Panc1 (cell line): ENCODE measurements at regions of chr1 and their contacts with region 1.

Region 1: DNA sequence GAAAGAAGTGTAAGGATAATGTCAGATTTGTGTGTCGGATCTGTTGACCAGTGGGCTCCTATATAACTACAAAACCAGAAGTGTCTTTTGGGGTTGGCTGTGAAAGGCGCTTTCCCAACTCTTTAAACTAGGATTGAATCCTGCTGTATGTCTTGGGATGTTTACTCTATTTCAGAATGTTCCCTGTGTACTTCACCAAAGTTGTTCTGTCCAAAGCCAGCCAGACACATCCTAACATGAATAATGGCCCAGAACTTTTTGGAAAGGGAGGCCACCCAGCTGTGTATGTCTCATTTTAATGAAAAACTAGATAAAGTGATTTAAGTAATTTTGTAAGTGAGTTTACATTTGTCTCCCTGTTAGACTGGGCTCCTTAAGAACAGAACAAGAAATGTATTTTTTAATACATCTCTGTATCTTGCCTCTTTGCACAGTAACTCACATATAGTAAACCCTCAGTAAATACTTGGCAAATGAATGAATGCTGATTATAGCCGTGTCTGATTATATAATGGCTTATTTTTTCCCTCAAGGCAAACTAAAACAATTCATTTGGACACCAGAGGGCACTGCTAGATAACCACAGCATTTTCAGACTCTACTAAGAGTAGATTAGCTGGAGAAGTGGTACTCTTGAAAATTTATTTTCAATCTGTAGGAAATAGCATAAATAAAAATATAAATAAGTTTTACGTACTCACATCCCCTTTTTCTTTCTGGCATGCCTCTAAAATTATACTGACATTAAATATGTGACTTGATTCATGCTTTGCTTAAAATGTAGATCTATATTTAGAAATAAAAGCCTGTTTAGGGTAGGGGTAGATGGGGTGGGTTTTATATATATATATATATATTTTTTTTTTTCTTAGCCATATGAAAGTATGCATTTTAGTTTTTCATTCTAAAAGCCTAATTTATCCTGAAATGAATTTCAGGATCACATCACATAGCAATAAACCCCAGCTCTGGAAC is 23.8 kb downstream of the TSEN15 start:
- DNase-seq: no peak
- ATAC-seq: peak; percentile 66; the same call in 1 of the 2 replicates
- H3K4me3 ChIP-seq: no peak overlapping the region
- H3K27ac ChIP-seq: no peak overlapping the region
- H3K4me1 ChIP-seq: no peaks in the 10 kb centered on the region
- H3K27me3 ChIP-seq: no peaks in the 10 kb centered on the region
- CTCF ChIP-seq: peak; percentile 58; the same call in 1 of the 2 replicates

Region 2: DNA sequence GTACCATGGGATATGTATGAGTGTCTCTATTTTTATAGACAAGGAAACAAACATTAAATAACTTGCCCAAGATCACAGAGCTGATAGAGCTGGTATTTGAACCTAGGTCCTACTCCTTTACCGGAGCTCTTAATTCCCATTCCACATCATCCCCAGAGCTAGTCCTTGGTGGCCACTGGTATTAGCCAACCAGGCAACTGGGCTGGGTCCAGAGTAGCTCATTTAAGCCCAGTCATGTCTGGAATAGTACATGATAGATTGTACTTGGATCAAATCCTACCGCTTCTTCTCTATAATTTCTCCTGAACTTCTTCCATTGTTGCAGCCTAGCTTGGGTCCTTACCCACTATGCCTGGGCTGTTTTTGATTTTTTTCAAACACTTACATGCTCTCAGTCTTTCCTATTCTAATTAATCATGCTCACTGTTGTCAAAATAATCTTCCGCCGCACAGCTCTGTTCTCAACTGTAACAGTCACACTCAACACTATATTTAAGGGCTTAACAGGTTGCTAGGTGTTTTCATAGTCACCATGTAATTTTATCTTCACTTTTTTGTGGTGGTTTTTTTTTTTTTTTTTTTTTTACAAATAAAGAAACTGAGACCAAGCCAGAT is 118.0 kb before region 1 on chr1:
- CTCF ChIA-PET with region 1: no interaction called
- POLR2A ChIA-PET with region 1: interaction called, 17 read pairs
- in situ Hi-C with region 1: no loop called
- intact Hi-C with region 1: no loop called
- DNase-seq: no peak
- ATAC-seq: no peak
- H3K4me3 ChIP-seq: no peak overlapping the region
- H3K27ac ChIP-seq: no peak overlapping the region
- H3K4me1 ChIP-seq: no peaks in the 10 kb centered on the region
- H3K27me3 ChIP-seq: no peaks in the 10 kb centered on the region
- CTCF ChIP-seq: no peak

Region 3: GRCh38 chr1:184143449-184143848 is 68.1 kb after region 1 on chr1:
- CTCF ChIA-PET with region 1: no interaction called
- POLR2A ChIA-PET with region 1: no interaction called
- in situ Hi-C with region 1: no loop called
- intact Hi-C with region 1: no loop called
- DNase-seq: no peak
- ATAC-seq: no peak
- H3K4me3 ChIP-seq: no peak overlapping the region
- H3K27ac ChIP-seq: no peak overlapping the region
- H3K4me1 ChIP-seq: no peaks in the 10 kb centered on the region
- H3K27me3 ChIP-seq: peaks cover 9% of the 10 kb centered on the region; the same call in 1 of the 2 replicates
- CTCF ChIP-seq: no peak

Region 4: GRCh38 chr1:184222652-184223052 is 147.3 kb after region 1 on chr1:
- CTCF ChIA-PET with region 1: no interaction called
- POLR2A ChIA-PET with region 1: no interaction called
- in situ Hi-C with region 1: no loop called
- intact Hi-C with region 1: loop called (anchors 2 kb)
- DNase-seq: peak; percentile 54
- ATAC-seq: no peak
- H3K4me3 ChIP-seq: no peak overlapping the region
- H3K27ac ChIP-seq: no peak overlapping the region
- H3K4me1 ChIP-seq: 0 out of 2 replicates have a peak, but pooled peaks cover 2% of the 10 kb centered on the region
- H3K27me3 ChIP-seq: no peaks in the 10 kb centered on the region
- CTCF ChIP-seq: peak; percentile 94

Region 5: DNA sequence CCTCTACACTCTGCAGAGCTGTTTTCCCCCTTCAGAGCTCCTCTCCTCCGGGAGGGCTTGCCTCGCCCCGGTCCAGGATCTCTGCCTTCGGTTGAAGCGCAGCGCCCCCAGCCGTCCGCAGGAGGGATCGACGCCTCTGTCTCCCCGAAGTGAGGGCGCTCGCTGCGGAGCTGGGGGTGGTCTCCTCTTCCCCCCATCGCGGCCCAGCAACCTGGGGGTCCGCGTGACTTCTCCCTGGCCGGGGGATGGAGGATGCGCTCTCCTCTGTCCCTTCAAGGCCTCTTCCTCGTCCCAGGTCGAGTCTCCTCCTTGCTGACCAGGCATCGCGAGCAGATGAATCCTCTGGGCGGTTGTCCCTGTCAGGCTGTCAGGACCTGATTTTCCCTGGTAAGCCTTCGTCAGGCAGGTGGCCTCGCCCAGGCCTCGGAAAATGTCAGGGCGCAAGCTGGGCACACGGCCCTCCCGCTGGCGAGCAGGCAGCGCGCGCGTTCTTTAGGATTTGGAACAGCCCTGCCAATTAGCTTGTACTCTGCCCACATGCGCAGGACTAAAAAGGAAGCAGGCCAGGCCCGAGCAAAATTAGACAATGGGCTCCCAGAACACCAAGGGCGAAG is 588.8 kb after region 1 on chr1:
- CTCF ChIA-PET with region 1: no interaction called
- POLR2A ChIA-PET with region 1: no interaction called
- in situ Hi-C with region 1: no loop called
- intact Hi-C with region 1: loop called (anchors 2 kb)
- DNase-seq: no peak
- ATAC-seq: peak; percentile 90
- H3K4me3 ChIP-seq: peak overlapping the region; percentile 14 to 44; a peak in 3 of 4 replicates
- H3K27ac ChIP-seq: no peak overlapping the region
- H3K4me1 ChIP-seq: no peaks in the 10 kb centered on the region; the same call in 1 of the 2 replicates
- H3K27me3 ChIP-seq: peaks cover 2% of the 10 kb centered on the region
- CTCF ChIP-seq: peak; percentile 93